OCI-LY7 (cell line): ENCODE measurements at regions of chrX and their contacts with region 1.

Region 1: GRCh38 chrX:153554519-153555167 is 37.2 kb downstream of the ATP2B3 start:
- DNase-seq: peak; percentile 53
- H3K4me3 ChIP-seq: no peak overlapping the region
- H3K27ac ChIP-seq: no peak overlapping the region
- H3K4me1 ChIP-seq: no peaks in the 10 kb centered on the region
- CTCF ChIP-seq: peak; percentile 77

Region 2: DNA sequence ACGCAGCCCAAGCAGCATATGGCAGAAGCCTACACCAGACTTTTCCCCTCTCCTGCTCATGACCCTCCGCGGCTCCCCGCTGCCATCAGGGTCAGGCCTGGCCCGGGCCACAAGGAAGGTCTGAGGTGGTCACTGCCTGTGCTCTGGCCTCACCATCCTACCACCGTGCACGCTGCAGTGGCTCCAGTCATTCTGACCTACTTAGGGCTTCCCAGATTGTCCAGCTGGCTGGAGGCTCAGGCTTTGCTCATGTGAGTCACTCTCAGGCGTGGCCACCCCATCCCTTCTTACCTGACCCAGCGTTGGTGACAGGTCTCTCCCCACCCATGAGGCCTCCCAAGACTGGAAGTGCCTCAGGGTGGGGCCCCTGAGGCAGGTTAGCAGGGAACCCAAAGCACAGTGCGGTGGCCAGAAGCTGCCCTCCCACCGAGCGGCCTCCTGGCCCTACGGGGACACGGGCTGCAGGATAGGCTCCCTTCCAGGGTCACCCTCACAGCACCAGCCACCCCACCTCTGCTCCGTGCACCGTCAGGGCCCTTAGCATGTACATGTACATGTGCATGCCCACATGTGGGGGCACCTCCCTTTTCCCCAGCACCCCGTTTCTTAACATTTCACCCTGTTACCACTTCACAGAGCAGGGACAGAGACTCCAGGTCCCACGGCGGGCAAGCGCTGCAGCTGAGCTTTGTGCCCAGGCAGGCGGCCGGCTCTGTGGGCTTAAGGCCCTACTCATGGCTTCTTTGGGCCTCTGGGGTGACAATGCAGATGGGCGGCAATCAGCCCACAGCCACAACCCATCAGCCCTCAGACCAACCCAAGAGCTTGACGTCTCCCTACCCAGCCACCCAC is 110.9 kb before region 1 on chrX:
- CTCF ChIA-PET with region 1: no interaction called
- POLR2A ChIA-PET with region 1: no interaction called
- intact Hi-C with region 1: no loop called
- DNase-seq: no peak
- H3K4me3 ChIP-seq: no peak overlapping the region
- H3K27ac ChIP-seq: no peak overlapping the region
- H3K4me1 ChIP-seq: no peaks in the 10 kb centered on the region
- CTCF ChIP-seq: no peak

Region 3: GRCh38 chrX:153599192-153600031 is 44.8 kb after region 1 on chrX:
- CTCF ChIA-PET with region 1: no interaction called
- POLR2A ChIA-PET with region 1: no interaction called
- intact Hi-C with region 1: loop called (anchors 2 kb)
- DNase-seq: peak; percentile 91
- H3K4me3 ChIP-seq: peak overlapping the region; percentile 81
- H3K27ac ChIP-seq: peak overlapping the region; percentile 18
- H3K4me1 ChIP-seq: peaks cover 22% of the 10 kb centered on the region
- CTCF ChIP-seq: no peak

Region 4: GRCh38 chrX:153649178-153649914 is 94.7 kb after region 1 on chrX:
- CTCF ChIA-PET with region 1: no interaction called
- POLR2A ChIA-PET with region 1: no interaction called
- intact Hi-C with region 1: loop called (anchors 1 kb)
- DNase-seq: peak; percentile 51
- H3K4me3 ChIP-seq: no peak overlapping the region
- H3K27ac ChIP-seq: no peak overlapping the region
- H3K4me1 ChIP-seq: no peaks in the 10 kb centered on the region
- CTCF ChIP-seq: peak; percentile 61

Region 5: DNA sequence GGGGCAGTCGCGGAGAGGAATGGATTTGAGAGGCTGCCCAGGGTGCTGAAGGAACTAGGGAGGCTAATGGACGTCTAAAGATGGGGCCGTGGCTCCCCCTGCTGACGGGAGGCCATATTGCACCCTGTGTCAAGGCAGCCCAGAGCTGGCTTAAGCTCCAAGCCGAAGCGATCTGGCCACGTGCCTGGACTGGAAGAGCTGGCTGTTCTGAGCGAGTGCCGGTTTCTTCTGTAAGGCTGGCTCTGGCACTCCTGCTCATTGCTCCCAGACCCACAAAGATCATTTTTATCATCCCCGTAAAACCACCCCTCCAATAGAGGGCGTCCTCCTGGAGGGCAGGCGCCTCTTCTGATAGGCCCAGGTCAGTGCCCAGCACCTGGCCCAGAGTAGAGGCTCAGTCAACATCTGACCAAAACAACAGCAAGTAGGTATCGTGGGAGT is 113.3 kb after region 1 on chrX:
- CTCF ChIA-PET with region 1: no interaction called
- POLR2A ChIA-PET with region 1: no interaction called
- intact Hi-C with region 1: loop called (anchors 1 kb)
- DNase-seq: peak; percentile 56
- H3K4me3 ChIP-seq: no peak overlapping the region
- H3K27ac ChIP-seq: no peak overlapping the region
- H3K4me1 ChIP-seq: no peaks in the 10 kb centered on the region
- CTCF ChIP-seq: peak; percentile 82